ENCODE measurements at regions of chr7 and their contacts with region 1.

Region 1: DNA sequence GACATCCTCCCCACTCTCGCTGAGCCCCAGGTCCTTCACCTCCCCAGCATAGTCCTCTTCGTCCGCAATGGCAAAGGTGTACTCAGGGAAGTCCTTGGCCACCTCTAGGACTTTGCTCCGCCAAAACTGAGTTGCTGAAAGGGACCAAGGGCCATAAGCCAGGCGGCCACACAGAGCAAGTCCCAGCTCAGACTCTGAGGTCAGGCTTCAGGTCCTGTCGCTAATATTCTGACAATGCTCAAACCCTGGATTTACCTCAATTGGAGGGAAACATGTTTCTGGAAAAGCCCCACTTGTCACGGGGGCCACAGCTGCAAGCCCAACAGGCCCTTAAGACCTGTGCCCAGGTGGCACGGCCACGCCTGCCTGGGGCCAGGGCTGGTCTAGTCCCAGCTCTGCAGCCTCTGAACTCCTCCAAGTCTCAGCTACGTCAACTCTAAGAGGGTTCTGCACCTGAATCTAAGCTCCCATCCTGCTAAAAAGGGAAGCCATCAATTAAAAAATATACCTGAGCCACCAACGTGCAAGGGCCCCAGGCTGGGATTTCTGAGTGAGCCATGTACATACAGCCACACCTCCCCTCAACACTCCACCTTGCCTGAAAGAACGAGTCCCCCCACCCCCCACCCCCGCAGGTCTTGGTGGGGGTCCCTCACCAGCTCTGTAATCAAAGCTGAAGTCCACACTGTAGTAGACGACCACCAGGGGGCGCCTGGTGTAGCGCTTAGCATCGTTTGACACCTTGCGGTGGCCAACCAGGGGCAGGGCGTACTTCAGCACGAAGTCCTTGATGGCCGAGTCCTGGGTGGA is 22.9 kb downstream of the PDIA4 start:
- DNase-seq: peak; percentile 85
- H3K4me3 Mint-ChIP-seq: no peak overlapping the region
- H3K27ac Mint-ChIP-seq: no peak overlapping the region
- H3K4me1 Mint-ChIP-seq: peaks cover 3% of the 10 kb centered on the region
- H3K27me3 Mint-ChIP-seq: no peaks in the 10 kb centered on the region

Region 2: DNA sequence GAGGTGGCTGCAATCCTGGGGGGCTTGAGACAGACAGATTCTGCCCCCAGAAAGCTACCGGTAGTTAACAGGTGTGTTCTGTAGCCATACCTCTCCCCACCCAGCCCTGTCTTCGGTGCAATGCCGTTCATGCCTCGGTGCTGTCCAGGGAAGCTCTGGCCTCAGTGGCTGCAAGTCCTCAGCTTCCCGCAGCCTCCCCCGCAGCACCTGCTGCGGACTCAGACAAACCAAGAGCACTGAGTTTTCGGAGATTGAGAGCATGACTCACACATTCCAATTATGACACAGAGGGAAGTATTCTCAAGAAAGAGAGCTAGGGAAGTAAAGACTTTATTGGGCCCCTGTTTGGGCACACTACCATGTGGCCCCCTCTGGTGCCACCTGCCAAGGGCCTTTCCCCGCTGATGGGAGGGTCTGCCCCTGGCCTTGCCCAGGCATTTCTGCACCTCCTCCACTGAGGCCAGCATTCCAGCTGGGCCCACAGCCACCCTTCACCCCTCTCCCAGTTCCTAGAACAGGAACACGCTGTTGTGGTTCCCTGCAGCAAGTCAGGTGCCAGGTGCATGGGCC is 91.2 kb before region 1 on chr7:
- CTCF ChIA-PET with region 1: no interaction called
- POLR2A ChIA-PET with region 1: no interaction called
- intact Hi-C with region 1: no loop called
- DNase-seq: peak; percentile 87
- H3K4me3 Mint-ChIP-seq: peak overlapping the region; percentile 62
- H3K27ac Mint-ChIP-seq: peak overlapping the region; percentile 93
- H3K4me1 Mint-ChIP-seq: peaks cover 66% of the 10 kb centered on the region
- H3K27me3 Mint-ChIP-seq: no peaks in the 10 kb centered on the region

Region 3: DNA sequence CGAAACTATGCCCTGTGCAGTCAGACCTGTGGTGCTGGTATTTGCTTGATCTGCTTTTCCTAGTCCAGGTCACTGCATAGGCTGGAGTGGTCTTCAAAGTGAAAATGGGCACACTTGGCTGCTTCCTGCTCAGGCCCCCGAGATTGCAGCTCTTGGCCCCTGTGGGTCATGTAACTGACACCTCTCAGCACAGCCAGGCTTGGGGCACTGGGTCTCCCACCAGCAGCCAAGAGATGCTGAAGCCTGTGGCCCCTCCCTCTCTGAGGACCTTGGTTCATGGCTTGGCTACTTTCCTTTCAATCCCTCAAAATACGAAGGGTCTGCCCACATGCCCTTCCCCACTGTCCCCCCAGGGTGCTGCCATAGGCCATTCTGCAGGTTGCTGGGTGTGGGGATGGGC is 10.8 kb before region 1 on chr7:
- CTCF ChIA-PET with region 1: interaction called, 10 read pairs
- POLR2A ChIA-PET with region 1: interaction called, 3 read pairs
- intact Hi-C with region 1: no loop called
- DNase-seq: no peak
- H3K4me3 Mint-ChIP-seq: no peak overlapping the region
- H3K27ac Mint-ChIP-seq: no peak overlapping the region
- H3K4me1 Mint-ChIP-seq: no peaks in the 10 kb centered on the region
- H3K27me3 Mint-ChIP-seq: no peaks in the 10 kb centered on the region

Region 4: GRCh38 chr7:149071641-149072437 is 66.4 kb after region 1 on chr7:
- CTCF ChIA-PET with region 1: interaction called, 10 read pairs
- POLR2A ChIA-PET with region 1: no interaction called
- intact Hi-C with region 1: no loop called
- DNase-seq: peak; percentile 59
- H3K4me3 Mint-ChIP-seq: peak overlapping the region; percentile 20
- H3K27ac Mint-ChIP-seq: no peak overlapping the region
- H3K4me1 Mint-ChIP-seq: peaks cover 4% of the 10 kb centered on the region
- H3K27me3 Mint-ChIP-seq: no peaks in the 10 kb centered on the region

Region 5: DNA sequence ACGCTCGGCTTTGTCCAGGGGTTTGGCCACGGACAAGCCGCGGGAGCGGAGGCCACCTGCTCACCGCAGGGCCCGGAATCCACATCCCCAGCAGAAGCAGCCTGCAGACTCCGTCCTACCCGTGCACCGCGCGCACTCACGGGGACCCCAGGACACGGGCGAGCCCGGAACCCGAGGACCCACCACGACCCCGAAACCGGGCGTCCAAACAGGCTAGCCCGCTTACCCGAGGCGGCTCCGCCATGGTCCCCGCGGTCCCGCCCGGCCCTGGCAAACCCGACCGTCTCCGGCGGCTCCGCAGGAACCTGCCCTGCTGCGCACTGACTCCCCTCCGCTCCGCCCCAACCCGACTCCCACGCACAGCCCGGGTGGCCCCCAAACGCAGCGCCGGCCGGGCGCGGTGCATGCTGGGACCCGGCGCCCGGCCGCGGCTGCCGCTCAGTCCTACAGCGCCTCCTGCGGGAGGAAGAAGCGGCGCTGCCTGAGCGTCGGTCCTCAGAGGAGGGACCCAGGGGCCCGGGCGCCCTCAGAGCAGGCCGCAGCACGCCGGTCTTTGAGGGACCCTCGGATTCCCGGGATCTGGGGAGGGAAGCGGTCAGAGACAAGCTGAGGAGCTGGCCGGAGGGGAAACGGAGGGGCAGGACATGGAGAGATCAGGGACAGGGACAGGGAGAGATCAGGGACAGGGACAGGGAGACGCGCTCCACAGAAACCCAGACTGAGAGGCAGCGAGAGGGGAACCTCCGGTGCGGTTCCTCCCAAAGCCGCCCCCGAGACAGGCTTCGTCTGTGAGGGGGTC is 85.2 kb after region 1 on chr7 and contains the start of gene ZNF786:
- CTCF ChIA-PET with region 1: interaction called, 12 read pairs
- POLR2A ChIA-PET with region 1: no interaction called
- intact Hi-C with region 1: loop called (anchors 1 kb)
- DNase-seq: peak; percentile 96
- H3K4me3 Mint-ChIP-seq: peak within 1 kb of the TSS; percentile 96
- H3K27ac Mint-ChIP-seq: peak within 1 kb of the TSS; percentile 99
- H3K4me1 Mint-ChIP-seq: peaks cover 21% of the 10 kb centered on the region
- H3K27me3 Mint-ChIP-seq: no peaks in the 10 kb centered on the region
- total RNA-seq, gene ZNF786: 4.5 to 6.1 TPM

Measured in activated CD4-positive, alpha-beta memory T cell treated with anti-CD3 and anti-CD28 coated beads for 36 hours (primary cell).